A549 (cell line): ENCODE measurements at regions of chr6 and their contacts with region 1.

Region 1: GRCh38 chr6:30283761-30284160 is 43.0 kb upstream of the TRIM39 start:
- DNase-seq: no peak
- ATAC-seq: no peak
- H3K4me3 ChIP-seq: no peak overlapping the region
- H3K27ac ChIP-seq: no peak overlapping the region
- H3K4me1 ChIP-seq: no peaks in the 10 kb centered on the region
- CTCF ChIP-seq: no peak
- EP300 ChIP-seq: no peak
- POLR2A ChIP-seq: no peak
- RAD21 ChIP-seq: no peak

Region 2: DNA sequence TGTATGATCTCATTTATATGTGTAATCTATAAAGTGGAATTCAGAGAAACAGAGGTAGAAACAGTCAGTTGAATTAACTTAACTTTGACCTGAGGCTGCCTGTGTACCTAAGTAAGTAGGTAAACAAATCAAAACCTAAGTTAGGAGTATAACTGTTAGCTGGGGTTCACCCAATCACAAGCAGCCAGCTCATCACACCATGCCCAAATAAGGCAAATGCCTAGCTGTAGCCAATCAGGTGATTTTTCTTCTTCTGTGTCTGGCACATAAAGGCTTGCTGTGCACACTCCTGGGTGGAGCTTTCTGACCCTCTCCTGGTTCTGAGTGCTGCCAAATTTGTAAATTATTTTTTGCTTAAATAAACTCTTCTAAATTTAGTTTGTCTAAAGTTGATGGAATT is 11.7 kb before region 1 on chr6:
- CTCF ChIA-PET with region 1: no interaction called
- POLR2A ChIA-PET with region 1: no interaction called
- DNase-seq: no peak
- ATAC-seq: no peak
- H3K4me3 ChIP-seq: no peak overlapping the region
- H3K27ac ChIP-seq: no peak overlapping the region
- H3K4me1 ChIP-seq: no peaks in the 10 kb centered on the region
- CTCF ChIP-seq: no peak
- EP300 ChIP-seq: no peak
- POLR2A ChIP-seq: no peak
- RAD21 ChIP-seq: no peak

Region 3: DNA sequence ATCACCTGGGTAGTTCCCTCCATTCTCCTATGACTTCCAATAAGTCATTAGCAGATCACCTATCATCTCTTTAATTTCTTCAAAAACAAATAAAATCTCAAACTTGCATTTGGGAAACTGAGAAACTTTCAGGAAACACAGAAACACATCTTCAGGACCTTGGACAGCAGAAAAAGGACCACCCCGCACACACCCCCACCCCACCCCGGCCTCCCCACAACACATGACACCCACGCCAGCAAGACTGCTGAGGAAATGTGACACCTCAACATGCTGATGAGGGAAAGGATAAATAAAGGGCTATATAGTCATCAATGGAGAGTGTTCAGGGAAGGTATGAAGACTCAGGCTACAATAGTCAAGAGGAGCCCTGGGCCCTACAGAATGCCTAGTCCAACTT is 27.3 kb after region 1 on chr6:
- CTCF ChIA-PET with region 1: no interaction called
- POLR2A ChIA-PET with region 1: interaction called, 12 read pairs
- DNase-seq: no peak
- ATAC-seq: no peak
- H3K4me3 ChIP-seq: no peak overlapping the region
- H3K27ac ChIP-seq: no peak overlapping the region
- H3K4me1 ChIP-seq: 0 out of 3 replicates have a peak, but pooled peaks cover 2% of the 10 kb centered on the region
- CTCF ChIP-seq: no peak
- EP300 ChIP-seq: no peak
- POLR2A ChIP-seq: no peak
- RAD21 ChIP-seq: no peak

Region 4: DNA sequence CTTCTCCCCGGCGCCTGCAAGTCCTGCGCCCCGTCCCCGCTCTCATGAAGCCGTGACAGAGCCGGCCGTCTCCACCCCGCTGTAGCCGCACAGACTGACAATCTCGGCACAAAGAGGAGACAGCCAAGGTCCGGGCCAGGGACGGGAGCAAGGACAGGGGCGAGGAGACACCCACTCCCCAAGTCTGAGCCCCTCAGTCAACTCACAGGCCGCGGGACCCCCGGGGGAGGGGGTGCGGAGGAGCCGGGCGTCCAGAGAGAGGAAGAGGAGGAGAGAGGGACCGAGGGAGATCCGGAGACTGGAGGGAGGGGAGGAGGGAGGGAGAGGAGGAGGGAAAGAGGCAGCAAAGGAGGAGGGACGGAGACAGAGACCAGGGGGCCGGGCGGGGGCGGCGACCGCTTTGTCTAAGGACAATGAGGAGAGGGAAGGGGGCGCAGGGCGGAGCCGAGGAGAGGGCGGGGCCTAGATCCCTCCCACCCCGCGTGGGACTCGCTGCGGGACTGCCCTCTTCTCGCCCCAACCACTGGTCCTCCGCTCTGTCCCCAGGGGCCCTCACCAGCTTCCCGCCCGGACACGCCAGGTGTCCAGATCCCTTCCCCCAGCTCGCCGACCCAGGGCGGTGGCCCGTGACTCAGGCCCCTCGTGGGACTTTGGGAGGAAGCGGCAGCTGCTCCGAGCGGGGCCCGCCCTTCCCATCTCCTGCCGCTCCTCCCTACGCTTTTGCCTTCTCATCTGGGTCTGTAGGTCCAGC is 403.3 kb after region 1 on chr6:
- CTCF ChIA-PET with region 1: no interaction called
- POLR2A ChIA-PET with region 1: no interaction called
- DNase-seq: peak; percentile 54 to 85
- ATAC-seq: peak; percentile 51 to 74
- H3K4me3 ChIP-seq: peak overlapping the region; percentile 84
- H3K27ac ChIP-seq: peak overlapping the region; percentile 83 to 99
- H3K4me1 ChIP-seq: peaks cover 63% of the 10 kb centered on the region
- CTCF ChIP-seq: no peak
- EP300 ChIP-seq: no peak
- POLR2A ChIP-seq: no peak; the same call in 1 of the 2 replicates
- RAD21 ChIP-seq: no peak